ENCODE measurements at regions of chr1 and their contacts with region 1.

Region 1: GRCh38 chr1:30888391-30888790 is 20.2 kb downstream of the SDC3 start:
- DNase-seq: peak; percentile 70 to 85 (median 74)
- ATAC-seq: peak; percentile 90 to 92 (median 92)
- H3K4me3 ChIP-seq: no peak overlapping the region
- H3K27ac ChIP-seq: peak overlapping the region; percentile 44 to 88 (median 62)
- H3K4me1 ChIP-seq: peaks cover 0 to 60% (median 27%) of the 10 kb centered on the region in 12 donors
- H3K27me3 ChIP-seq: no peaks in the 10 kb centered on the region
- CTCF ChIP-seq: no peak
- POLR2A ChIP-seq: no peak

Region 2: GRCh38 chr1:30779294-30780071 is 108.9 kb before region 1 on chr1:
- intact Hi-C with region 1: no loop called
- DNase-seq: peak; percentile 72 to 91 (median 78)
- ATAC-seq: peak; percentile 27 to 74 (median 73)
- H3K4me3 ChIP-seq: no peak overlapping the region
- H3K27ac ChIP-seq: peak overlapping the region in 1 of 12 donors; percentile 75
- H3K4me1 ChIP-seq: peaks cover 0 to 42% (median 4%) of the 10 kb centered on the region in 12 donors
- H3K27me3 ChIP-seq: peaks cover 0 to 10% (median 0%) of the 10 kb centered on the region in 9 donors
- CTCF ChIP-seq: peak; percentile 88 to 99 (median 94)
- POLR2A ChIP-seq: no peak

Region 3: DNA sequence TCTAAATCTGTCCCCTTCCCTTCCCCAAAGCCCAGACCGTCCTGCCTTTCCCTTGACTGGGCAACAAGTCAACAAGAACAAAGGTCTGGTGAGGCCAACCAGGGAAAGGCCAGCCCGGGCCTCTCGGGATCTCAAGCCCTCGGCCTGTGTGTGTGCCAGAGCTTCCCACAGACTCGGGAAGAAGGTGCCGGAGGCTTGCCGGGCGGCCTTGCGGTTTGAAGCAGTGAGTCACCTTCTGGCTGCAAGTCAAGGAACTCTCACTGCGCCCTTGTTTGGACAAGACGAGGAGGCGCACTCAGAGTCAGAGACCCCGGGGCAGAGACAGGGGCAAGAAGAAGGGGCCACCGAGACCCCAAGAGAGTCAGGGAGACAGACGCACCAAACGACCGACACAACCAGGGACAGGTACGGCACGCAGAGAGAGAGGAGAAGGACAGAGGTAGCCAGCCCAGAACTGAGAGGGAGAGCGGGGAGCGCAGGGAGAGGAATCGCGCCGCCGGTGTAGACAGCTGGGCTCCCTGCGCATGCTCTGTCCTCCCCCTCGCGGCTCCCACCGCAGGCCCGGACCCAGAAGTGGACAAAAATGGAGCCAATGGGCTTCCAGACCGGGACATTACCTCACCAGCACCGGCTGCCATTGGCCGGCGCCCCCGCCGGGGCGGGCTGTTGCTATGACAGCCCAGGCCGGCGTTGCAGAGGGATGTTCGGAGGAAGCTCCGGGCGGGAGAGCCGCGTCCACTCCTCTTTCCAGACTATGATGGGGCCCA is 64.2 kb before region 1 on chr1:
- intact Hi-C with region 1: loop called in 2 of 10 experiments (anchors 5 kb)
- DNase-seq: peak; percentile 95 to 97 (median 96)
- ATAC-seq: peak; percentile 97 to 99 (median 98)
- H3K4me3 ChIP-seq: peak overlapping the region in 11 of 12 donors; percentile 17 to 58 (median 53)
- H3K27ac ChIP-seq: peak overlapping the region; percentile 90 to 98 (median 92)
- H3K4me1 ChIP-seq: peaks cover 3 to 25% (median 18%) of the 10 kb centered on the region in 12 donors
- H3K27me3 ChIP-seq: peaks cover 0 to 7% (median 0%) of the 10 kb centered on the region in 9 donors
- CTCF ChIP-seq: peak in 2 of 12 donors; percentile 7 to 20
- POLR2A ChIP-seq: peak; percentile 35 to 78

Region 4: DNA sequence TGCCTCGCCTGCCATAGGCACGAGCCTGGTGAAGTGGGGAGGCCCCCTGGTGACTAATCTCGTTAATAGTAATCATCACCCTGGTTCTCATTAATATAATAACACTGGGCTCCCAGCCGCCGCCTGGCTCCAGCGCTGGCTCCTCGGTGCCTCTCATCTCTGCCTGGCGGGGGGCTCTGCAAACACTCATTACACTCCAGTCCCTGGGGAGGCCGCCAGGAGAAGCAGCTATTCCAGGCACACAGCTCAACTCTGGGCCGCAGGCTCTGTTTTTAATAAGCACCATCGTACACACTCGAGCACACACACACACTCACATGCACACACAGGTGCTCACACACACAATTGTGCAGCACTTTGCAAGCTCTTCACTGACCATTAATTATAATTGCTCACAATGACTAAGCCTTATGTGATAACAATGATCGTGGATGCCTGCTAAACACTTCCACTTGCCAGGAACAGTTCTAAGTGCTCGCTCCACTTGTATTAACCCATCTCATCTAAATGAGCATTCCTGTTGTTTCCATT is 32.1 kb before region 1 on chr1:
- intact Hi-C with region 1: loop called in 1 of 10 experiments (anchors 5 kb)
- DNase-seq: peak in 1 of 5 donors; percentile 55
- ATAC-seq: peak in 1 of 4 donors; percentile 8
- H3K4me3 ChIP-seq: no peak overlapping the region
- H3K27ac ChIP-seq: peak overlapping the region in 1 of 12 donors; percentile 25
- H3K4me1 ChIP-seq: peaks cover 0 to 20% (median 12%) of the 10 kb centered on the region in 12 donors
- H3K27me3 ChIP-seq: no peaks in the 10 kb centered on the region
- CTCF ChIP-seq: peak in 3 of 12 donors; percentile 5 to 8 (median 7)
- POLR2A ChIP-seq: no peak

Measured in heart left ventricle (tissue), 16 donors.